Activated CD4-positive, alpha-beta memory T cell treated with anti-CD3 and anti-CD28 coated beads for 36 hours (primary cell): ENCODE measurements at regions of chr1 and their contacts with region 1.

Region 1: GRCh38 chr1:180631766-180632325 is at the start of gene XPR1:
- DNase-seq: peak; percentile 99
- H3K4me3 Mint-ChIP-seq: no peak within 1 kb of the TSS
- H3K27ac Mint-ChIP-seq: peak within 1 kb of the TSS; percentile 82
- H3K4me1 Mint-ChIP-seq: peaks cover 5% of the 10 kb centered on the region
- H3K27me3 Mint-ChIP-seq: no peaks in the 10 kb centered on the region
- total RNA-seq, gene XPR1: 17.9 to 18.4 TPM

Region 2: DNA sequence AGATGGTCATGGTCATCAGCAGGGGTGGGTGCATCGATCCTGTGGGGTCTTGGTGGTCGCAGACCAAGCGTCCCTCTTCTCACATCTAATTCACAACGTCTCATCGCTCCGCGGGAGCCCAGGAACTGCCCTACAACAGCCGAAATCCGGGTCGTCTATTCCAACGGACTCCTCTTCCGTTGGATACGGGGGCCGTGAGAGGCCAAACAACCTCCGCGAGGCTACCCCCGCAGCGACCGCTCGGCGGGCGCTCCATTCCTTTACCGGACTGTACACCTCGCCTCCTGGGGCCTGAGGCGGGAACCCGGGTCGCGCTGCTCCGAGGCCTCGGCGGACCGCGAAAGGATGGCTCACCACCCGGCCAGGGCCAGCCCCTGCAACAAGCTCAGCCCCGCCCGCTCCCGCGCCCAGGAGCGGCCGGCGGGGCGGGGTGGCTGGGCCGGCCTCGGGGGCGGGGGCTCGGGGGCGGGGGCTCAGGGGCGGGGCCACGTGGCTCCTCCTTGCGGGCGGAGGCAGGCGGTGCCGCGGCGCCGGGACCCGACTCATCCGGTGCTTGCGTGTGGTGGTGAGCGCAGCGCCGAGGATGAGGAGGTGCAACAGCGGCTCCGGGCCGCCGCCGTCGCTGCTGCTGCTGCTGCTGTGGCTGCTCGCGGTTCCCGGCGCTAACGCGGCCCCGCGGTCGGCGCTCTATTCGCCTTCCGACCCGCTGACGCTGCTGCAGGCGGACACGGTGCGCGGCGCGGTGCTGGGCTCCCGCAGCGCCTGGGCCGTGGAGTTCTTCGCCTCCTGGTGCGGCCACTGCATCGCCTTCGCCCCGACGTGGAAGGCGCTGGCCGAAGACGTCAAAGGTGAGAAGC is 477.3 kb before region 1 on chr1 and contains the start of gene QSOX1:
- CTCF ChIA-PET with region 1: no interaction called
- POLR2A ChIA-PET with region 1: no interaction called
- intact Hi-C with region 1: loop called (anchors 5 kb)
- DNase-seq: peak; percentile 93
- H3K4me3 Mint-ChIP-seq: peak within 1 kb of the TSS; percentile 89
- H3K27ac Mint-ChIP-seq: peak within 1 kb of the TSS; percentile 73
- H3K4me1 Mint-ChIP-seq: peaks cover 26% of the 10 kb centered on the region
- H3K27me3 Mint-ChIP-seq: no peaks in the 10 kb centered on the region
- total RNA-seq, gene QSOX1: 40.3 to 42.4 TPM

Region 3: DNA sequence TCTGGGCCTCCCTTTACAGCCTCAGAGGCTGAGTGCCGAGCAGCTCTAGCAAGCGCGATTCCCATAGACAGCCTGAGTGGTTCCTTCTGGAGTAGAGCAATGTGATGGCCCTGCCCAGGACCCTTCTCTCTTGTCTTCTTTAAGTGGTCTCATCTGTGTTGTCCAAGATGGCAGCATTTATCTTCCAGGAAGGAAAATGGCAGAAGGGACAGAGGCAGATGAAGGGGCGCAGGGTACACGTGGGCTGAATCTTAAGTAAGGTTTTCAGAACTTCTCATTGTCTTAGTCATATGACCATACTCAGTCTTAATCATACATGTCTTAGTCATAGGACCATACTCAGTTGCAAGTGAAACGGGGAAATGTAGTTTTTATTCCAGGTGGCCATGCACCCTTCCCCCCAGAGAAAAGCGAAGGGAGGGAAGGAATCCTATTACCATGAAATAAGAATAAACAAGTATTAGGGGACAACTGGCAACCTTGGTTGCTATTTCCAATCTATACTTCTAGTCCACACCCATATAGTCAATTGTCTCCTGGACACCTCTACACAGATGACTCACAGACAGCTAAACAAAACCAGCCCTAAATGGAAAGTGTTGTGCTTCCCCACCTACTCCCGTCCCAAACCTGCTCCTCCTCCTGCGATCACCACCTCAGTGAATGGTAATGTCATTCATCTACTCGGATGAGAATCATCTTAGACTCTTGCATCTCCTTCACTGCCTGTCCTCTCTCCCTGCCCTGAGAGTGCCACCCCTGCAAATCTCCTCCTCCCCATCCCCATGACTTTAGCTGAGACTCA is 59.8 kb before region 1 on chr1:
- CTCF ChIA-PET with region 1: no interaction called
- POLR2A ChIA-PET with region 1: no interaction called
- intact Hi-C with region 1: loop called (anchors 1 kb)
- DNase-seq: peak; percentile 77
- H3K4me3 Mint-ChIP-seq: peak overlapping the region; percentile 17
- H3K27ac Mint-ChIP-seq: peak overlapping the region; percentile 48
- H3K4me1 Mint-ChIP-seq: peaks cover 22% of the 10 kb centered on the region
- H3K27me3 Mint-ChIP-seq: peaks cover 20% of the 10 kb centered on the region

Region 4: GRCh38 chr1:180586671-180587155 is 45.1 kb before region 1 on chr1:
- CTCF ChIA-PET with region 1: no interaction called
- POLR2A ChIA-PET with region 1: no interaction called
- intact Hi-C with region 1: no loop called
- DNase-seq: peak; percentile 39
- H3K4me3 Mint-ChIP-seq: no peak overlapping the region
- H3K27ac Mint-ChIP-seq: peak overlapping the region; percentile 9
- H3K4me1 Mint-ChIP-seq: peaks cover 19% of the 10 kb centered on the region
- H3K27me3 Mint-ChIP-seq: peaks cover 2% of the 10 kb centered on the region

Region 5: GRCh38 chr1:180951836-180952656 is 320.2 kb after region 1 on chr1:
- CTCF ChIA-PET with region 1: no interaction called
- POLR2A ChIA-PET with region 1: no interaction called
- intact Hi-C with region 1: loop called (anchors 1 kb)
- DNase-seq: no peak
- H3K4me3 Mint-ChIP-seq: no peak overlapping the region
- H3K27ac Mint-ChIP-seq: no peak overlapping the region
- H3K4me1 Mint-ChIP-seq: peaks cover 13% of the 10 kb centered on the region
- H3K27me3 Mint-ChIP-seq: no peaks in the 10 kb centered on the region

Region 6: DNA sequence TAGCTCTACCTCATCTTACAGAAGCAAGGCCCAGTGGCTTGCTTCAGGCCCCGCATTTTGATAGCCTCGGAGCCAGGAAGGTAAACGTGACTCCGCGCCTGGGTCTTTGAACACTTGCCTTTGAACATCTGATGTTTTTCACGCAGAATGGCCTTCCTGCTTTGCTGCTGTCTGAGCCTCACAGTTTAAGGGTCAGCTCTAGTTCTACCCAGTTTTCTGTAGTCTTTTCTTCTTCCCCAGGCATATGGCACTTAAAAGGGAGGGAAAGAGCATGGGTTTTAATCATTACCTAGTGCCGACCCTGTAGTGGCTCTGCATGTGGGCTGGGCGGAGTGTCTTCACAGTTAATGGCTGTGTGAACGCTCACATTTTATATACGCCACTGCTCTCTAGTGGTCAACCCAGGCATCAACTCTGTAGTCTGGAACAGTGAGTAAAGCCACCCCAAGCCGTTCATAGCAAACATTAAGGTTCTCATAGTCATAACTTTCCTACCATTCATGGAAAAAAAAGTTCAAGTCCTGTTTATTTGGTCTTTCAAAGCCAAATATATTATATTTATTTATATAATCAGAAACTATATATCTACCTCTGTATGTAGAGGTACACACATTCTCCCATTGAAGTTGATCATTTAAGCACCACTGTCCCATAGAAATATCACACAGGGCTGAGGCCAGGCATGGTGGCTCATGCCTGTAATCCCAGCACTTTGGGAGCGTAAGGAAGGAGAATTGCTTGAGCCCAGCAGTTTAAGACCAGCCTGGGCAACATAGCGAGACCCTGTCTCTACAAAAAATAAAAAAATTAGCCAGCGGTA is 534.7 kb after region 1 on chr1:
- CTCF ChIA-PET with region 1: no interaction called
- POLR2A ChIA-PET with region 1: no interaction called
- intact Hi-C with region 1: loop called (anchors 2 kb)
- DNase-seq: peak; percentile 80
- H3K4me3 Mint-ChIP-seq: no peak overlapping the region
- H3K27ac Mint-ChIP-seq: no peak overlapping the region
- H3K4me1 Mint-ChIP-seq: peaks cover 3% of the 10 kb centered on the region
- H3K27me3 Mint-ChIP-seq: no peaks in the 10 kb centered on the region